Esophagus muscularis mucosa (tissue), 4 donors: ENCODE measurements at regions of chr18 and their contacts with region 1.

Region 1: GRCh38 chr18:51107082-51107481 is 77.1 kb downstream of the SMAD4 start:
- DNase-seq: no peak
- H3K4me3 ChIP-seq: no peak overlapping the region
- H3K27ac ChIP-seq: no peak overlapping the region
- H3K4me1 ChIP-seq: peaks cover 6 to 8% (median 6%) of the 10 kb centered on the region in 4 donors
- H3K27me3 ChIP-seq: no peaks in the 10 kb centered on the region
- CTCF ChIP-seq: no peak
- EP300 ChIP-seq: no peak
- POLR2A ChIP-seq: no peak

Region 2: DNA sequence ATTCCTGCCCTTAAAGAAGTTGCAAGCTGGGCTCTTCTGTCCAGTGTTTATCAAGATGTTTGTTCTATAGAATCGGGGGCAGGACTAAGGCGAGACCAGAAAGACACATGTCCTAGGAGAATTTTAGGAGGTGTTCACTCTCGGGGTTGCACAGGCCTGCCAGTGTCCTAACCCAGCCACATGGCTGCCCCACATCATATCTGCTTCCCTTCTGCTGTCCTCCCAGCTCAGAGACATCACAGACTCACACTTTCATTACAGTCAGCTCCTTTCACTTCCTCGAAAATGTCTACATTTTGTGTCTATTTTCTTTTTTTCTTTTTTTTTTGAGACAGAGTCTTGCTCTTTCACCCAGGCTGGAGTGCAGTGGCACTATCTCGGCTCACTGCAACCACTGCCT is 276.5 kb before region 1 on chr18:
- intact Hi-C with region 1: no loop called
- DNase-seq: no peak
- H3K4me3 ChIP-seq: no peak overlapping the region
- H3K27ac ChIP-seq: peak overlapping the region in 2 of 4 donors; percentile 0 to 19
- H3K4me1 ChIP-seq: peaks cover 0 to 12% (median 2%) of the 10 kb centered on the region in 4 donors
- H3K27me3 ChIP-seq: no peaks in the 10 kb centered on the region
- CTCF ChIP-seq: no peak
- EP300 ChIP-seq: no peak
- POLR2A ChIP-seq: no peak

Region 3: GRCh38 chr18:51197661-51198424 is 90.8 kb after region 1 on chr18 and contains the start of gene MEX3C:
- intact Hi-C with region 1: no loop called
- DNase-seq: peak; percentile 100
- H3K4me3 ChIP-seq: peak within 1 kb of the TSS; percentile 69 to 91 (median 78)
- H3K27ac ChIP-seq: peak within 1 kb of the TSS; percentile 97 to 99 (median 98)
- H3K4me1 ChIP-seq: peaks cover 21 to 37% (median 34%) of the 10 kb centered on the region in 4 donors
- H3K27me3 ChIP-seq: no peaks in the 10 kb centered on the region
- CTCF ChIP-seq: peak in 2 of 3 experiments; percentile 22 to 36
- EP300 ChIP-seq: no peak
- POLR2A ChIP-seq: no peak
- total RNA-seq, gene MEX3C: 22.8 to 38.0 (median 30.3) TPM

Region 4: DNA sequence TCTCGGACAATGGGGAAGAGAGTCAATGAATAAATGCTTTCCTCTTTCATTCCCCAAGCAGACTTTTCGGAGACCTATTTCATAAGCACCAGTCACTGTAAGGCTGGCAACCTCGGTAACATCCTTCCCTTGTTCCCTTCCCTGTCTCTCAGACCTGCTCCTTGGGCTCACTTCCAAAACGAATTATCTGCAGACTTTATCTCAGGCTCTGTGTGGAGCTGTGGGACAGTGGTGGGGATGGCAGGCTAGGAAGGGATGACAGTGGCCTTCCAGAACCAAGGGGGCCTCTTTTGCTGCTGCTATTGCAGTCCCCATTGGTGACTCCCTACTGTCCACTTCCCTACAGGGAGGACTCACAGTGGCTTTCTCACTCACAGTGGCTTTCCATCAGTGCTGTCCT is 276.0 kb after region 1 on chr18:
- intact Hi-C with region 1: loop called (anchors 5 kb)
- DNase-seq: no peak
- H3K4me3 ChIP-seq: no peak overlapping the region
- H3K27ac ChIP-seq: no peak overlapping the region
- H3K4me1 ChIP-seq: no peaks in the 10 kb centered on the region
- H3K27me3 ChIP-seq: no peaks in the 10 kb centered on the region
- CTCF ChIP-seq: no peak
- EP300 ChIP-seq: no peak
- POLR2A ChIP-seq: no peak